Caco-2 (cell line): ENCODE measurements at regions of chr3 and their contacts with region 1.

Region 1: DNA sequence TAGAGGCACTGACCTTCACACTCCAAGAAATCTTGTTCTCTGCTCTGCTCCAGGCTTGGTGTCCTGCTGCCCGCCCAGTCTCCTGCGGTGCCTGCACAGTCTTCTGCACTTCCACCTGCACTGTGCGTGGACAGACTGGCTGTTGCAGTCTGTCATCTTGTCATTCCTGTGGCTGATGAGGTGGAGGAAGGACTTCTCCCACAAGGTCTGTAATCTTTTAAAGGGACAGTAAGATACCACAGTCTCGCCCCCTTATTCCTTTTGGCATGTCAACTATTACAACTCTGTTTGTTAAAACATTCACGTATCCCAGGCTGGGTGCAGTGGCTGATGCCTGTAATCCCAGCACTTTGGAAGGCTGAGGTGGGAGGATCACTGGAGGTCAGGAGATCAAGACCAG is 54.1 kb upstream of the IGF2BP2 start:
- DNase-seq: no peak
- H3K4me3 ChIP-seq: no peak overlapping the region
- H3K4me3 Mint-ChIP-seq: no peak overlapping the region
- H3K27ac Mint-ChIP-seq: no peak overlapping the region
- H3K4me1 ChIP-seq: no peaks in the 10 kb centered on the region
- H3K4me1 Mint-ChIP-seq: no peaks in the 10 kb centered on the region
- H3K27me3 ChIP-seq: no peaks in the 10 kb centered on the region
- H3K27me3 Mint-ChIP-seq: no peaks in the 10 kb centered on the region
- CTCF ChIP-seq: no peak

Region 2: DNA sequence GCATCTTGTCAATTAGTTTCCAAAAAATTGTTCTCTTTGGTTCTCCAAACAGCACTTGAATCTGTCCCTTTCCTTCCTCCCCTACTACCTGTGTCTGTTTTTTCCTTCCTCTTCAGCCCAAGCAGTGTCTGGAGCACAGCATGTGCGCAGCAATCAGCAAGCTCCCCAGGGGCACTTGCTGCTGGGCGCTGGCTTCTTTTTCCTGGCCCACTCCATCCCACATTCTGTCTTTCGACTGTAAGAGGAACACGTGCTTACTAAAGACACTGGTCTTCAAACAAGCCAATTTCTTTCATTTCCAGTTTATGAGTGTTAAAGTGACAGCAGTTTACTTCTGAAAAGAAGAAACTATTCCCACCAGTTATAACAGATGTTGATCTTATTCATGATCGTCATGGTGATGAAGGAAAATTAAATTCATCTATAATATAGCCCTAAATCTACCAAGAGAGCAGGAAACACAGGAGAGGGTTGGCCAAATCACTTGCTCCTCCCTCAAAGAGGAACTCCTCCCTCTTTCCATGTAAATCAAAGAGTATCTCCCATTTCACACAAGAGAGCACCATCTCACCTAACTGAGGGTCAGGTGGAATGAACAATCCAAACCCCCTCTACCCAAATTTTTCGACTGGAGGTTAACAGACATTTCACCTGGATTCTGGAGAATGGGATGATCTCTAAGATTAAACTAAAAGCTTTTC is 169.5 kb before region 1 on chr3:
- CTCF ChIA-PET with region 1: interaction called, 11 read pairs
- POLR2A ChIA-PET with region 1: no interaction called
- intact Hi-C with region 1: no loop called
- DNase-seq: no peak
- H3K4me3 ChIP-seq: no peak overlapping the region
- H3K4me3 Mint-ChIP-seq: no peak overlapping the region
- H3K27ac Mint-ChIP-seq: no peak overlapping the region
- H3K4me1 ChIP-seq: peaks cover 17% of the 10 kb centered on the region
- H3K4me1 Mint-ChIP-seq: peaks cover 11% of the 10 kb centered on the region
- H3K27me3 ChIP-seq: no peaks in the 10 kb centered on the region
- H3K27me3 Mint-ChIP-seq: no peaks in the 10 kb centered on the region
- CTCF ChIP-seq: no peak